Tibial artery (tissue), 4 donors: ENCODE measurements at regions of chr16 and their contacts with region 1.

Region 1: GRCh38 chr16:84672276-84673202 is 24.2 kb downstream of the KLHL36 start:
- DNase-seq: peak; percentile 76 to 81
- H3K4me3 ChIP-seq: no peak overlapping the region
- H3K27ac ChIP-seq: no peak overlapping the region
- H3K4me1 ChIP-seq: no peaks in the 10 kb centered on the region
- H3K27me3 ChIP-seq: no peaks in the 10 kb centered on the region
- CTCF ChIP-seq: peak; percentile 88 to 92

Region 2: GRCh38 chr16:84617791-84618580 is 54.6 kb before region 1 on chr16 and contains the start of gene COTL1:
- intact Hi-C with region 1: loop called (anchors 5 kb)
- DNase-seq: peak; percentile 97 to 98
- H3K4me3 ChIP-seq: peak within 1 kb of the TSS; percentile 59 to 80
- H3K27ac ChIP-seq: peak within 1 kb of the TSS; percentile 65 to 69
- H3K4me1 ChIP-seq: peaks cover 4 to 28% (median 23%) of the 10 kb centered on the region in 4 donors
- H3K27me3 ChIP-seq: no peaks in the 10 kb centered on the region
- CTCF ChIP-seq: no peak

Region 3: GRCh38 chr16:84703681-84704080 is 31.1 kb after region 1 on chr16:
- intact Hi-C with region 1: no loop called
- DNase-seq: no peak
- H3K4me3 ChIP-seq: no peak overlapping the region
- H3K27ac ChIP-seq: no peak overlapping the region
- H3K4me1 ChIP-seq: peaks cover 0 to 25% (median 13%) of the 10 kb centered on the region in 4 donors
- H3K27me3 ChIP-seq: no peaks in the 10 kb centered on the region
- CTCF ChIP-seq: no peak

Region 4: DNA sequence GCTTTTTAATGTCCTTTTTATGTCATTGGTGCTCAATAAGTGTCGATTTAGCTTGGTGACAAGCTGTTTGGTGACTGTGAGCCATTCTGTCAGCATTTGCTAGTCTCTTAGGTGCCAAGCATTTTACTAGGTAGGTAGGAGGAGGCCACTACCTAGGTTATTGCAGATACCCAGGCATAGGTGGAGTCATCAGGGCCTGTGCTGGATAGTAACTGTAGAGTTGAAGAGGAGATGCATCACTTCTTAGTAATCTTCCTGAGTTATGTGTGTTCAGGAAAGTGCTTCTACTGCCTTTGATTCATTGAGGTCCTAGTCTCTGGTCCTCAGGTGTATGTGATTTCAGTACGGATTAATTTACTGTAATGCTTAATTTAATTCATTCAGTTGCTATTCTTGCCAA is 44.9 kb after region 1 on chr16:
- intact Hi-C with region 1: loop called (anchors 5 kb)
- DNase-seq: no peak
- H3K4me3 ChIP-seq: no peak overlapping the region
- H3K27ac ChIP-seq: no peak overlapping the region
- H3K4me1 ChIP-seq: peaks cover 0 to 6% (median 0%) of the 10 kb centered on the region in 4 donors
- H3K27me3 ChIP-seq: no peaks in the 10 kb centered on the region
- CTCF ChIP-seq: no peak

Region 5: GRCh38 chr16:84819644-84820324 is 147.2 kb after region 1 on chr16 and contains the start of gene CRISPLD2:
- intact Hi-C with region 1: no loop called
- DNase-seq: peak; percentile 92 to 97
- H3K4me3 ChIP-seq: peak within 1 kb of the TSS; percentile 53 to 56
- H3K27ac ChIP-seq: peak within 1 kb of the TSS; percentile 30 to 42
- H3K4me1 ChIP-seq: peaks cover 0 to 22% (median 15%) of the 10 kb centered on the region in 4 donors
- H3K27me3 ChIP-seq: peaks cover 0 to 10% of the 10 kb centered on the region in 2 donors
- CTCF ChIP-seq: no peak

Region 6: GRCh38 chr16:84868829-84869472 is 196.4 kb after region 1 on chr16:
- intact Hi-C with region 1: no loop called
- DNase-seq: no peak
- H3K4me3 ChIP-seq: no peak overlapping the region
- H3K27ac ChIP-seq: no peak overlapping the region
- H3K4me1 ChIP-seq: no peaks in the 10 kb centered on the region
- H3K27me3 ChIP-seq: no peaks in the 10 kb centered on the region
- CTCF ChIP-seq: no peak